GM12878 (cell line): ENCODE measurements at regions of chr4 and their contacts with region 1.

Region 1: DNA sequence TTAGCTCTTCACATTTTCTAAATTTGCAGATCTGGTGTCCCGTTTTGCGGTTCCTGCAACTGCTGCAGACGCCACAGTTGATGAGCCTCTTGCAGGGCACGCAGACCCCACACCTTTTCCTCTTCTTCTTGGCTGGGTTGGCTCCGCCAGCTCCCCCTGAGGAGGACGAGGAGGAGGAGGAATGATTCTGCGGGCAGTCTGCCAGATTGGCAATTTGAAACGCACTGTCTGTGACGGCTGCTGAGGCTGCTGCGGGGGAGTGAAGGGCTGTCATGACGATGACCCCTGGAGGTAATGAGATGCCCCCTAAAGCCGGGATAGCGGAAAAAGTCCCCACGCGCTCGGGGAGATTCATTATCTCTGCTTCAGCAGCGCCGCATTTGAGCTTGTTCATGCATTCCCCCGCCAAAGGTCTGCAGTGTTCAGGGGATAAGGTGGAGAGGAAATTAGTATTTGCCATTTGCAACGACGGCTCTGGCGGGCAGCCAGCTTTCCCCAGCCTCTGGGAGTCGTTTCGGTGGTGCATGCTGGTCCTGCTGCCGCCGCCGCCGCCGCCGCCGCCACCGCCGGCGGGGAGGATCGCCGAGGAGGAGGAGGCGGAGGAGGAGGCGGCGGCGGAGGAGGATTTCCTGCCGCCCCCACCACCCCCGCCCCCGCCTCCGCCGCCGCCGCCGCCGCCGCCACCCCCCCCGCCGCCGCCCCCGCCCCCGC is 3.8 kb downstream of the CXXC4 start:
- DNase-seq: no peak
- ATAC-seq: peak; percentile 7
- H3K4me3 ChIP-seq: peak overlapping the region; percentile 78
- H3K27ac ChIP-seq: peak overlapping the region; percentile 97
- H3K4me1 ChIP-seq: peaks cover 16% of the 10 kb centered on the region
- H3K27me3 ChIP-seq: no peaks in the 10 kb centered on the region
- CTCF ChIP-seq: no peak
- EP300 ChIP-seq: no peak
- POLR2A ChIP-seq: peak; percentile 63
- RAD21 ChIP-seq: no peak

Region 2: GRCh38 chr4:104015680-104016253 is 475.2 kb before region 1 on chr4:
- CTCF ChIA-PET with region 1: no interaction called
- POLR2A ChIA-PET with region 1: no interaction called
- RAD21 ChIA-PET with region 1: no interaction called
- SMC1A ChIA-PET with region 1: no interaction called
- in situ Hi-C with region 1: no loop called
- intact Hi-C with region 1: loop called (anchors 1 kb)
- DNase-seq: no peak
- ATAC-seq: peak; percentile 78
- H3K4me3 ChIP-seq: no peak overlapping the region
- H3K27ac ChIP-seq: no peak overlapping the region
- H3K4me1 ChIP-seq: no peaks in the 10 kb centered on the region
- H3K27me3 ChIP-seq: no peaks in the 10 kb centered on the region
- CTCF ChIP-seq: peak; percentile 32 to 51 (median 45); a peak in 5 of 6 replicates
- EP300 ChIP-seq: no peak
- POLR2A ChIP-seq: no peak
- RAD21 ChIP-seq: peak; percentile 70

Region 3: GRCh38 chr4:104235967-104236366 is 255.0 kb before region 1 on chr4:
- CTCF ChIA-PET with region 1: no interaction called
- POLR2A ChIA-PET with region 1: no interaction called
- RAD21 ChIA-PET with region 1: no interaction called
- SMC1A ChIA-PET with region 1: no interaction called
- in situ Hi-C with region 1: no loop called
- intact Hi-C with region 1: no loop called
- DNase-seq: no peak
- ATAC-seq: no peak
- H3K4me3 ChIP-seq: no peak overlapping the region
- H3K27ac ChIP-seq: no peak overlapping the region
- H3K4me1 ChIP-seq: no peaks in the 10 kb centered on the region
- H3K27me3 ChIP-seq: no peaks in the 10 kb centered on the region
- CTCF ChIP-seq: no peak
- EP300 ChIP-seq: no peak
- POLR2A ChIP-seq: no peak
- RAD21 ChIP-seq: no peak

Region 4: DNA sequence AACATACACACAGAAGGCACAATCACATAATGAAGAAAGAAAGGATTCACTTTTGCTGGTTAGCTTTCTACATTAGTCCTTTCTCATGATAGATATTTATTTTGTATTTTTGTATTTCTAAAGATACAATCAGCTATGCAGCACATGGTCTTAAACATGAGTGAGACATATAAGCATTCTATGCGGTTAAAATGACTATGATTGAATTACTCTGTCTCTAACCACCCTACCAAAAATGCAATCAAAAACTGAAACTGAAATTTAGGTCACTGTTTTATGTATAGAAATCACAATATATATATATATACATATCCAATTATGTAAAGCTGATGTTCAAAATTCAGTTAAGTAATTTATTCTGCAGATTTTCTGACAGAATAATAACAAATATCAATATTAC is 18.2 kb before region 1 on chr4:
- CTCF ChIA-PET with region 1: interaction called, 3 read pairs
- POLR2A ChIA-PET with region 1: no interaction called
- RAD21 ChIA-PET with region 1: interaction called, 7 read pairs
- SMC1A ChIA-PET with region 1: interaction called, 16 read pairs
- in situ Hi-C with region 1: no loop called
- intact Hi-C with region 1: no loop called
- DNase-seq: no peak
- ATAC-seq: peak; percentile 80
- H3K4me3 ChIP-seq: no peak overlapping the region
- H3K27ac ChIP-seq: no peak overlapping the region
- H3K4me1 ChIP-seq: no peaks in the 10 kb centered on the region
- H3K27me3 ChIP-seq: no peaks in the 10 kb centered on the region
- CTCF ChIP-seq: no peak
- EP300 ChIP-seq: no peak
- POLR2A ChIP-seq: no peak
- RAD21 ChIP-seq: no peak

Region 5: GRCh38 chr4:104728380-104729122 is 237.6 kb after region 1 on chr4:
- CTCF ChIA-PET with region 1: no interaction called
- POLR2A ChIA-PET with region 1: no interaction called
- RAD21 ChIA-PET with region 1: no interaction called
- SMC1A ChIA-PET with region 1: no interaction called
- in situ Hi-C with region 1: no loop called
- intact Hi-C with region 1: no loop called
- DNase-seq: no peak
- ATAC-seq: peak; percentile 21; the same call in 1 of the 3 replicates
- H3K4me3 ChIP-seq: no peak overlapping the region
- H3K27ac ChIP-seq: no peak overlapping the region
- H3K4me1 ChIP-seq: no peaks in the 10 kb centered on the region
- H3K27me3 ChIP-seq: no peaks in the 10 kb centered on the region
- CTCF ChIP-seq: no peak
- EP300 ChIP-seq: no peak
- POLR2A ChIP-seq: no peak
- RAD21 ChIP-seq: no peak

Region 6: GRCh38 chr4:104743215-104743653 is 252.3 kb after region 1 on chr4:
- CTCF ChIA-PET with region 1: no interaction called
- POLR2A ChIA-PET with region 1: no interaction called
- RAD21 ChIA-PET with region 1: interaction called, 9 read pairs
- SMC1A ChIA-PET with region 1: interaction called, 4 read pairs
- in situ Hi-C with region 1: no loop called
- intact Hi-C with region 1: loop called (anchors 5 kb)
- DNase-seq: peak; percentile 89
- ATAC-seq: peak; percentile 94
- H3K4me3 ChIP-seq: peak overlapping the region; percentile 30; the same call in 1 of the 2 replicates
- H3K27ac ChIP-seq: peak overlapping the region; percentile 95
- H3K4me1 ChIP-seq: peaks cover 12% of the 10 kb centered on the region
- H3K27me3 ChIP-seq: no peaks in the 10 kb centered on the region
- CTCF ChIP-seq: no peak
- EP300 ChIP-seq: peak; percentile 46 to 93; a peak in 3 of 4 replicates
- POLR2A ChIP-seq: no peak
- RAD21 ChIP-seq: no peak

Region 7: DNA sequence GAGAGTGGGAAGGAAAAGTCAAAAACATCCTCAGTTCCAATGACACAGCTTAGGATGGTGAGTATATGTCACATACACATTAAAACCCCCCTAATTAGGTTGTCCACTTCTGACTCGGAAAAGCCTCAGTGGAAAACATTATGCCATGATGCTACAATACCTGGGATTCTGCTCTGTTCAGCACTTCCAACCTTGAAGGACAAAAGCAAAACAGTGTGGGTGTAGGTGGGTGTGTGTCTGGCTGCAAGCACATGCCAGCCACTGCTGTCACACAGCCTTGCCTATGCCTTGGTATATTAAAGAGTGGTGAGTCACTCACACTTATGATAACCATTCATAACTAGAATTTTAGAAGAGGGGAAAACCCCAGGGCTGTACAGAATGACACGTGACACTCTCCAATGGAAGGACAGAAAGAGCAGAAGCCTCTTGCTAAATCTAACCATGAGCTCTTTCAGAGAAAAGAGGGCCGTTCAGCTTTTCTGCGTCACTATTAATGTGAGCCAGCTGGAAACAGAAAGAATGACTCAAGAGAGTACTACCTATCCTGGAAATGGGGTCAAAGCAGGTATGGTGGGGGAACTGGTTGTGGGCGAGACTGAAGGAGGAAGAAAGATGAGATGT is 815.3 kb after region 1 on chr4:
- CTCF ChIA-PET with region 1: no interaction called
- POLR2A ChIA-PET with region 1: no interaction called
- RAD21 ChIA-PET with region 1: no interaction called
- SMC1A ChIA-PET with region 1: no interaction called
- in situ Hi-C with region 1: no loop called
- intact Hi-C with region 1: loop called (anchors 5 kb)
- DNase-seq: peak; percentile 91
- ATAC-seq: peak; percentile 91
- H3K4me3 ChIP-seq: peak overlapping the region; percentile 24; the same call in 1 of the 2 replicates
- H3K27ac ChIP-seq: peak overlapping the region; percentile 86
- H3K4me1 ChIP-seq: peaks cover 14% of the 10 kb centered on the region
- H3K27me3 ChIP-seq: no peaks in the 10 kb centered on the region
- CTCF ChIP-seq: no peak
- EP300 ChIP-seq: peak; percentile 75 to 77; a peak in 3 of 4 replicates
- POLR2A ChIP-seq: peak; percentile 43; the same call in 1 of the 2 replicates
- RAD21 ChIP-seq: 0 out of 2 replicates have a peak, but pooled peaks have one; percentile 3